ENCODE measurements at regions of chr6 and their contacts with region 1.

Region 1: DNA sequence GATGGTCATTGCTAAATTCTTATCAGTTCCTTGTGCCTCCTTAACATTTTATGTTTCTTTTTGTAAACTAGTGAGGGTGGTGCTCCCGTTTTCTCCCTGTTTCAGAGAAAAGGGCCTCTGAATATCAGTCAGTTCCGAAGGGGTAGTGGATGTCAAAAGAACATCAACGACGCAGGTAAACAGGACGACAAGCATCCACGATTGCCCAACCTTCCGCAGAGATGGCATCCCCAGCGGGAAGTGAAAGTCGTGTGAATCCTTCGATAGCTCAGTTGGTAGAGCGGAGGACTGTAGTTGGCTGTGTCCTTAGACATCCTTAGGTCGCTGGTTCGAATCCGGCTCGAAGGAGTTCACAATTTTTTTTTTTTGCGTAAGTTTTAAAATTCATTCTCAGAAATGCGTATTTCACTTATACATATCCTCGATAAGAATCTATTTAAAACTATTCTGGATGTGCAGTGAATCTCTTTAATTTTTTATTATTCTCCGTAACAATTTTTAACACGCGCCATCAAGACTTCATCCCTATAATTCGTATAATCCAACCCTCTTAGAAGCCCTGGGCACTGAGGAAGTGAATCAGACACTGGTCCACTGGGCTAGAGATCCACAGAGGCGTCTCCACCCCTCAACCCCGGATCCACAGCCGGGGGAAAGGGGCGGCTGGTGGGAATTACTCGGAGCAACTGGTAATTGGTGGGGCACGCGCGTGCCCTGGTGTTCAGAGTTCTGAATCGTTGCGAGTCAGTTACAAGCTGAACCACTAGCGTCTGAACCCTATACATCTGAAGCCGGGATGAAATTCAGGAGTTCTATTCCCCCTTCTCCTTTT is 27.9 kb upstream of the ABT1 start:
- DNase-seq: peak; percentile 97
- ATAC-seq: peak; percentile 88
- H3K4me3 Mint-ChIP-seq: peak overlapping the region; percentile 95
- H3K27ac Mint-ChIP-seq: peak overlapping the region; percentile 86
- H3K4me1 Mint-ChIP-seq: peaks cover 41% of the 10 kb centered on the region
- H3K27me3 Mint-ChIP-seq: no peaks in the 10 kb centered on the region

Region 2: DNA sequence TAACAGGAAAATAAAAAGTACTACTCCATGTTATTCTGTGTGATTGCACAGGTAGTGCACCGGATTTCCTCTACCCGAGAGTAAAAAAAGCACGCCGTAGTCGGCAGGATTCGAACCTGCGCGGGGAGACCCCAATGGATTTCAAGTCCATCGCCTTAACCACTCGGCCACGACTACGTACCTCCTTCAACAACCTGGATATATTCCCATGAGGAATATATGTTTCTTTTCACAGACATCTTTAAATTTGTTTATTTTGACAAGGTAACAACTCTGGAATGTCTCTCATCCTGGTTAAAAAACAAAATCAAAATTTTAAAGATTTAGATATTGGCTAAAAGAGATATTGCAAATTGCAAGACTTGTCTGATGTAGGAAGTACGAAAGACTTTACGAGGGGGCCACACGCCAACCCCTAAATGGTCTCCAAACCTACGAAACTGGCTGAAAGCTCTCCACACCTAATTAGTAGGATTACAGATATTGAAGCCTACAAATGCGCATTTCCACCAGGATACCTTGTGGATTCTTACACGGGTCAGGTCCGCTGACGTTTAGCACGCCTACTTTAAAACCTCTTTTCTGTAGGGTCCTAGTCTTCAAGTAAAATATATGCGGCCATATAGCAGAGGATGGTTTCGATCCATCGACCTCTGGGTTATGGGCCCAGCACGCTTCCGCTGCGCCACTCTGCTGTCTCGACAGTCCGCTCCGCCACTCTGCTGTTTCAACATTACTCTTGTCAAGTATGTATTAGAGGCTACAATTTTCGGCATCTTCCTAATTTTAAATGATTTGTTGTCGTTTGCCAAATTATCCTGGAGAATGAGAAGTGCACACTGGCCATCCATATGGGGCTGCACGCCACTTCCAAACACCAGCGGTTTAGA is 256.1 kb before region 1 on chr6:
- CTCF ChIA-PET with region 1: interaction called, 3 read pairs
- POLR2A ChIA-PET with region 1: interaction called, 11 read pairs
- DNase-seq: peak; percentile 89
- ATAC-seq: peak; percentile 87
- H3K4me3 Mint-ChIP-seq: peak overlapping the region; percentile 84
- H3K27ac Mint-ChIP-seq: peak overlapping the region; percentile 89
- H3K4me1 Mint-ChIP-seq: peaks cover 49% of the 10 kb centered on the region
- H3K27me3 Mint-ChIP-seq: no peaks in the 10 kb centered on the region

Region 3: DNA sequence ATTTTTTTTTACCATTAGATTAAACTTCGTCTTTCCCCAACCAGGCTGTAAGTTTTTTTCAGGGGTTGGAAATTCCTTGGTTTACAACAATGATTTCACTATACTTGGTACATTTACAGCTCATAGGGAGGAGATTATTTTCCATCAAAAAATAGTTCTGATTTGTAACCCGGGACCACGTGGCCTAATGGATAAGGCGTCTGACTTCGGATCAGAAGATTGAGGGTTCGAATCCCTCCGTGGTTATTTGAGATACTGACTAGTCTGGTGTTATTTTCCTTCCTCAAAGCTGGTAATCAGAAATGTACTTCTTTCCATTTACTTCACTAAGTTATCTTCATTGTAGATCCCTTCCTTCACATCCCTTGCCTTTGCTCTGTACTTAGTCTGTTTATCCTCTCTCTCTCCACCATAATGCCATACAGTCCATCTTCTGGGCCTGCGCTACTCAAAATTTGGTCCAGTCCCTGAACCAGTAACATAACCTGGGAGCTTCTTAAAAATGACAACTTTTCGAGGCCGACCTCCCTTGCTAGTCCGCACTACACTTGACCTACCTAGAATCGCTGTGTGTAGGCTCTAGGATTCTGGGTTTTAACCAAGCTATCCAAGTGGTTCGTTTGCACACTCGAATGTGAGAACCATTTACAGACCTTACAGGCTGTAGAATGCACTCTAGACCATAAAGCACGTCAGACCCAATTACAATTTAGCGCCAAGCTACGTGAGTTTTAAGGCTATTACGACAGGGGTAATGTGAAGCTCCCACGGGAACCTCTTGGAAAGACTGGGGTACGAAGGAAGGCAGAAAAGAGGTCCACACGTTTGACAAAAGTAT is 246.0 kb before region 1 on chr6:
- CTCF ChIA-PET with region 1: interaction called, 17 read pairs
- POLR2A ChIA-PET with region 1: no interaction called
- DNase-seq: peak; percentile 84
- ATAC-seq: peak; percentile 72
- H3K4me3 Mint-ChIP-seq: peak overlapping the region; percentile 86
- H3K27ac Mint-ChIP-seq: peak overlapping the region; percentile 86
- H3K4me1 Mint-ChIP-seq: peaks cover 36% of the 10 kb centered on the region
- H3K27me3 Mint-ChIP-seq: peaks cover 16% of the 10 kb centered on the region

Region 4: DNA sequence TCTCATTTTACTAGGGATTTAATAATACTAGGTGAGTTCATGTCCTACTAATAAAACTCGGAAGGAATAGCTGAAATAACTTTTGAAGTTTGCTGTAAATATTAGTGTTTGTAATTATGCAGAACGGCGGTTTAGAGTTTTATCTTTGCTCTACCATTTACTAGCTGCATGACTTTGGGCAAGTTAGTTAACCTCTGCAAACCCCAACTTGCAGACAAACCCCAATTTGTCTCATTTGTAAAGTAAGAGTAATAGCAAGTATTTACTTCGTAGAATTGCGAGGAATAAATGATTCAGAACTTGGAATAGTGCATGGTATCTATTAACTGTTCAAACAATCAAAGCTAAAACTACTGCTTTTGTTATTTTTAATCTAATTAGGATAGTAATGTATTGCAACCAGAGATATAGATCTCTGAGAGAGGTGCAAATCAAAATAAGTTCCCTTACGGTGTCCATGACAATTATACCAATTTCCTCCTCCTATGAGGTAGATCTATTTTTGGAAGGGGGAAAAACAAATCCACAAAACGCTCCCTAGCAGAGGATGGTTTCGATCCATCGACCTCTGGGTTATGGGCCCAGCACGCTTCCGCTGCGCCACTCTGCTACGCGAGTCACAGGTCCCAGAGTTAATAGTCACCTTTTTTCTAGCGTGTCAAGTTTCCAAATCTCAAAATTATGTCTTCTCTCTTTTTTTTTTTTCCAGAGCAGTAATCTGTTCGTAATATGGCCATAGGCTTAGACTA is 238.9 kb before region 1 on chr6:
- CTCF ChIA-PET with region 1: interaction called, 21 read pairs
- POLR2A ChIA-PET with region 1: interaction called, 5 read pairs
- DNase-seq: peak; percentile 74
- ATAC-seq: peak; percentile 47
- H3K4me3 Mint-ChIP-seq: peak overlapping the region; percentile 77
- H3K27ac Mint-ChIP-seq: peak overlapping the region; percentile 82
- H3K4me1 Mint-ChIP-seq: peaks cover 57% of the 10 kb centered on the region
- H3K27me3 Mint-ChIP-seq: peaks cover 29% of the 10 kb centered on the region

Region 5: GRCh38 chr6:26537846-26538571 is 30.8 kb before region 1 on chr6 and contains the start of gene HMGN4:
- CTCF ChIA-PET with region 1: interaction called, 17 read pairs
- POLR2A ChIA-PET with region 1: interaction called, 15 read pairs
- DNase-seq: peak; percentile 88
- ATAC-seq: peak; percentile 71
- H3K4me3 Mint-ChIP-seq: peak within 1 kb of the TSS; percentile 87
- H3K27ac Mint-ChIP-seq: peak within 1 kb of the TSS; percentile 99
- H3K4me1 Mint-ChIP-seq: peaks cover 58% of the 10 kb centered on the region
- H3K27me3 Mint-ChIP-seq: peaks cover 2% of the 10 kb centered on the region
- total RNA-seq, gene HMGN4: 80.8 to 84.9 TPM

Region 6: GRCh38 chr6:26553635-26554446 is 15.0 kb before region 1 on chr6:
- CTCF ChIA-PET with region 1: interaction called, 38 read pairs
- POLR2A ChIA-PET with region 1: interaction called, 4 read pairs
- DNase-seq: peak; percentile 89
- ATAC-seq: peak; percentile 59
- H3K4me3 Mint-ChIP-seq: no peak overlapping the region
- H3K27ac Mint-ChIP-seq: no peak overlapping the region
- H3K4me1 Mint-ChIP-seq: peaks cover 36% of the 10 kb centered on the region
- H3K27me3 Mint-ChIP-seq: no peaks in the 10 kb centered on the region

Region 7: DNA sequence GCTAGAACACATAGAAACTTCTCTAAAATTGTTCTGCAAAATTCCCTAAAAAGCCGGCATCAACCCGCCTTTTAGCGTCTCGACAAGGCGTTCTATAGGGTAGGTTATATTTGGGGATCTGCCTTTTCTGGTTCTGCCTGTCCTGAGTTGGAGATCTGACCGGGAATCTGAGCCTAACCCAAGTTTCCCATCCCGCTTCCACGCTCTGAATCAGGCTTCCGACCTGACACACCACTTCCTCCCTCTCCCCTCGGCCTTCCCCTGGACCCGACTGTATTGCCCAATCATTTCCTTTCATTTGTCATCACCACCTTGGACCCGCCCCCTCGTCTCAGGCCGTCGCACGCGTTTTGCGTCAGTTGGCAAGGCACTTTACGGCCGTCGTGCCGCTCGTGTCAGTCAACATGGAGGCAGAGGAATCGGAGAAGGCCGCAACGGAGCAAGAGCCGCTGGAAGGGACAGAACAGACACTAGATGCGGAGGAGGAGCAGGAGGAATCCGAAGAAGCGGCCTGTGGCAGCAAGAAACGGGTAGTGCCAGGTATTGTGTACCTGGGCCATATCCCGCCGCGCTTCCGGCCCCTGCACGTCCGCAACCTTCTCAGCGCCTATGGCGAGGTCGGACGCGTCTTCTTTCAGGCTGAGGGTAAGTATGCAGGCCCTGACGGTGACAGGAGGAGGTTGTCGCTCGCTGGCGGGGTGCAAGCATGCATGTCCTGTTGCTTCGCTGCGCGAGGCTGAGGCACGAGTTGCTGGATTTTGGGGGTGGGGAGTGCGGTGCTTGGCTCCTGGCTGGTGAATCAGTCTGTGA is 28.0 kb after region 1 on chr6 and contains the start of gene ABT1:
- CTCF ChIA-PET with region 1: interaction called, 298 read pairs
- POLR2A ChIA-PET with region 1: interaction called, 5 read pairs
- DNase-seq: peak; percentile 98
- ATAC-seq: peak; percentile 89
- H3K4me3 Mint-ChIP-seq: no peak within 1 kb of the TSS
- H3K27ac Mint-ChIP-seq: peak within 1 kb of the TSS; percentile 59
- H3K4me1 Mint-ChIP-seq: peaks cover 31% of the 10 kb centered on the region
- H3K27me3 Mint-ChIP-seq: peaks cover 18% of the 10 kb centered on the region
- total RNA-seq, gene ABT1: 25.0 to 25.3 TPM